ENCODE measurements at regions of chr9 and their contacts with region 1.

Region 1: DNA sequence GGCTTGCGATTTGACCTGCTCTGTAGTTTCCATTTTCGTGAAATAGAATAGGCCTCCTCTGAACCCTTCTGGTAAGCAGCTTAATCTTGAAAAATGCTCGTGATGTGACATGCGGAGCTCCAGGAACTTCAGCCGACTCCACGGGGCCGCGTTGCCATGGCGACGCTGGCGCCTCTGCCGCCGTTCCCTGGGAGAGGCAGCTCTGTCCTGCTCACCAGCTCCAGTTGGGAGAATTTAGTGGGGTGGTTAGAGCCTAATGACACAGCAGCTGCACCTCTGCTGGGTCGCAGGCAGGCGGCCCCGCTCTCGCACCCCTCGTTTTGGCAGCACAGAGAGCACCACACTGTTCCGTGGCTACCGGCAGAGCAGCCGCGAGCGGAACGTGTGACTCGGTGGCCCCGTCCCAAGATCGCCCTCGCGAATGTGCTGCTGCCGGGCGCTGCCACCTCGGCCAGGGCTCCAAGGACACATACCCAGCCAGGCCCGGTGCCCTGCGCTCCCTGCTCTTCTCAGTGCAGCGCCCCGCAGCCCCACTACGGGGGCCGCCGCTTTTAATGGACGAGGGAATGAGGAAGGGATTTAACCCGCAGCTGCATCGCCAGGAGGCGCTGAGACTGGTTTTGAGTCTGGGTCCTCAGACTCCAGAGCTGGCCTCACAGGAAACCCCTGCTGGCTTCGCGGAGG is 131.2 kb upstream of the LMX1B start:
- DNase-seq: no peak
- ATAC-seq: no peak
- H3K4me3 Mint-ChIP-seq: no peak overlapping the region
- H3K27ac Mint-ChIP-seq: no peak overlapping the region
- H3K4me1 Mint-ChIP-seq: peaks cover 14% of the 10 kb centered on the region
- H3K27me3 Mint-ChIP-seq: no peaks in the 10 kb centered on the region

Region 2: GRCh38 chr9:126235336-126236243 is 246.9 kb before region 1 on chr9:
- CTCF ChIA-PET with region 1: no interaction called
- DNase-seq: no peak
- ATAC-seq: no peak
- H3K4me3 Mint-ChIP-seq: no peak overlapping the region
- H3K27ac Mint-ChIP-seq: no peak overlapping the region
- H3K4me1 Mint-ChIP-seq: no peaks in the 10 kb centered on the region
- H3K27me3 Mint-ChIP-seq: peaks cover 15% of the 10 kb centered on the region

Region 3: DNA sequence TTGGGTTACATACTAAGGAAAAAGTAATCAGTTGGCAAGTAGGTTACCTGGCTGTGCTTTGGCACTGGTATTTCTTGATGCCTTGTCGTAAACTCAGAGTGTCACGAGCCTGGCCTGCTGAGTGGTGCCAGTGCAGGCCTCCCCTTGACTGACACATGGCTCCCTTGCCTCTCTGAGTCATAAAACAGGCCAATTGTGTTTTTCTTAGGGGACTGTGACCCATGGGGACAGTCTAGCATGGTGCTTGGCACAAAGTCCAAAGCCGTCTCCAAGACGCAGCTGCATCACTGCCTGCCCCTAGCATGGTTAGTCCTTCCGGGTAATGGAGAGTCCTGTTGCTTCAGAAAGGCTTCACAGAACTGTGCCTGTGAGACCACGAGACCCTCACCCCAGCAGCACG is 23.4 kb before region 1 on chr9:
- CTCF ChIA-PET with region 1: no interaction called
- DNase-seq: no peak
- ATAC-seq: no peak
- H3K4me3 Mint-ChIP-seq: no peak overlapping the region
- H3K27ac Mint-ChIP-seq: no peak overlapping the region
- H3K4me1 Mint-ChIP-seq: peaks cover 7% of the 10 kb centered on the region
- H3K27me3 Mint-ChIP-seq: no peaks in the 10 kb centered on the region

Region 4: GRCh38 chr9:126471084-126471624 is 11.3 kb before region 1 on chr9:
- CTCF ChIA-PET with region 1: interaction called, 10 read pairs
- DNase-seq: peak; percentile 96
- ATAC-seq: peak; percentile 80
- H3K4me3 Mint-ChIP-seq: peak overlapping the region; percentile 33
- H3K27ac Mint-ChIP-seq: peak overlapping the region; percentile 92
- H3K4me1 Mint-ChIP-seq: peaks cover 68% of the 10 kb centered on the region
- H3K27me3 Mint-ChIP-seq: peaks cover 3% of the 10 kb centered on the region

Region 5: GRCh38 chr9:126506361-126506941 is 23.9 kb after region 1 on chr9:
- CTCF ChIA-PET with region 1: no interaction called
- DNase-seq: no peak
- ATAC-seq: no peak
- H3K4me3 Mint-ChIP-seq: no peak overlapping the region
- H3K27ac Mint-ChIP-seq: no peak overlapping the region
- H3K4me1 Mint-ChIP-seq: no peaks in the 10 kb centered on the region
- H3K27me3 Mint-ChIP-seq: peaks cover 6% of the 10 kb centered on the region

Region 6: GRCh38 chr9:126722252-126723078 is 240.0 kb after region 1 on chr9:
- CTCF ChIA-PET with region 1: no interaction called
- DNase-seq: peak; percentile 91
- ATAC-seq: peak; percentile 70
- H3K4me3 Mint-ChIP-seq: peak overlapping the region; percentile 78
- H3K27ac Mint-ChIP-seq: peak overlapping the region; percentile 94
- H3K4me1 Mint-ChIP-seq: peaks cover 40% of the 10 kb centered on the region
- H3K27me3 Mint-ChIP-seq: peaks cover 14% of the 10 kb centered on the region

Measured in activated CD8-positive, alpha-beta memory T cell treated with anti-CD3 and anti-CD28 coated beads, Interleukin-2, amount 10 ng/mL, durations not matched to agents 7 days and 5 days (primary cell).